HEK293 (cell line): ENCODE measurements at regions of chr12 and their contacts with region 1.

Region 1: GRCh38 chr12:50222275-50222795 is 55.2 kb upstream of the CERS5 start:
- H3K4me3 ChIP-seq: peak overlapping the region; percentile 45
- H3K27ac ChIP-seq: peak overlapping the region; percentile 88
- H3K4me1 ChIP-seq: peaks cover 22% of the 10 kb centered on the region
- CTCF ChIP-seq: peak; percentile 39; the same call in 1 of the 2 replicates

Region 2: GRCh38 chr12:50142993-50143392 is 79.3 kb before region 1 on chr12:
- CTCF ChIA-PET with region 1: no interaction called
- POLR2A ChIA-PET with region 1: no interaction called
- H3K4me3 ChIP-seq: no peak overlapping the region
- H3K27ac ChIP-seq: no peak overlapping the region
- H3K4me1 ChIP-seq: peaks cover 6% of the 10 kb centered on the region
- CTCF ChIP-seq: no peak

Region 3: DNA sequence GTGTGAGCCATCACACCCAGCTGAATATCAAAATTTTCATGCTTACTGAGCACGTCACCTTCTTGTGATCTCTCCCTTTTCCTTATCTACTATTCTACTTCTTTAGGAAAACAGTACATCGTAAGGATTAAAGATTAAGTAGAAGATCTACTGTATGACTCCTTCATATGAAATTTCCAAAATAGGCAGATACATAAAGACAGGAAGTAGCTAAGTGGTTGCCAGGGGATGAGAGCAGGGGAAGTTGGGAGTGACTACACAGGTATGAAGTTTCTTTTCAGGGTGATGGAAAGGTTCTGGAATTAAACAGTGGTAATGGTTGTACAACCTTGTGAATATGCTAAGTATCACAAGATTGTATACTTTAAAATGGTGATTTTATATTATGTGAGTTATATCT is 18.6 kb before region 1 on chr12:
- CTCF ChIA-PET with region 1: no interaction called
- POLR2A ChIA-PET with region 1: no interaction called
- H3K4me3 ChIP-seq: no peak overlapping the region
- H3K27ac ChIP-seq: no peak overlapping the region
- H3K4me1 ChIP-seq: no peaks in the 10 kb centered on the region
- CTCF ChIP-seq: no peak

Region 4: DNA sequence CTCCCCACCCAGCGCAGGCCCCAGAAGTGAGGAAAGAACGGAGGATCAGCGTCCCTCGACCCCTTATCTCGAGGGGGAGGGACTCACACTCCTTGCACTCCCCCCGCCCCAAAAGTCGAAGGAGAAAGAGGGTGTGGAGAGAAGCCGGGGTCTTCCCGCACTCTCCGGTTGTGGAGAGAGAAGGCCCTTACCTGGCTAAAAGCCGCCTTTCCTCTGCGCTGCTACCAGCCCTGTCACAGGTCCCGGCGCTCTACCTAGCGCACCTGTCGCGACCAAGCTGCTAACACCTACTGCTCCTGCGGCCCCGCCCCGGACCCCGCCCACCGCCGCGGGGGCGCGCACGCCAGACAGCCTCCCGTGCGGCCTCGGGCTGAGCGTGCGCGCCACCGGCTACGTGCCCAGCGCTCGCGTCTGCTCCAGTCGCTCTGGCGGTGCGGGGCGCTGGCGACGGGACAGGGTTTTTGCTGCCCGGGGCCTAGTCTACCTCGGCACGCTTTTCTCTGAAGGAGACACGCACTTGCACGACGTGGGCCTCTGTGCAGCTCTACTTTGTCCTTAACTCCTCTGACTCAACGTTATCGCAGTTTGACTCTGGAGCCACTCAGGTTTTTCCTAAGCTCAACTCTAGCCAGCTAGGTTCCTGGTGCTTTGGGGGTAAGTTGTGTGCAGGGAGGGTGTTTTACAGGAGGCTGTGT is 61.0 kb after region 1 on chr12 and contains the start of gene LIMA1:
- CTCF ChIA-PET with region 1: interaction called, 3 read pairs
- POLR2A ChIA-PET with region 1: interaction called, 17 read pairs
- H3K4me3 ChIP-seq: peak within 1 kb of the TSS; percentile 67
- H3K27ac ChIP-seq: peak within 1 kb of the TSS; percentile 63
- H3K4me1 ChIP-seq: peaks cover 4% of the 10 kb centered on the region; the same call in 1 of the 2 replicates
- CTCF ChIP-seq: peak; percentile 56; the same call in 1 of the 2 replicates